SK-N-SH (cell line): ENCODE measurements at regions of chr2 and their contacts with region 1.

Region 1: DNA sequence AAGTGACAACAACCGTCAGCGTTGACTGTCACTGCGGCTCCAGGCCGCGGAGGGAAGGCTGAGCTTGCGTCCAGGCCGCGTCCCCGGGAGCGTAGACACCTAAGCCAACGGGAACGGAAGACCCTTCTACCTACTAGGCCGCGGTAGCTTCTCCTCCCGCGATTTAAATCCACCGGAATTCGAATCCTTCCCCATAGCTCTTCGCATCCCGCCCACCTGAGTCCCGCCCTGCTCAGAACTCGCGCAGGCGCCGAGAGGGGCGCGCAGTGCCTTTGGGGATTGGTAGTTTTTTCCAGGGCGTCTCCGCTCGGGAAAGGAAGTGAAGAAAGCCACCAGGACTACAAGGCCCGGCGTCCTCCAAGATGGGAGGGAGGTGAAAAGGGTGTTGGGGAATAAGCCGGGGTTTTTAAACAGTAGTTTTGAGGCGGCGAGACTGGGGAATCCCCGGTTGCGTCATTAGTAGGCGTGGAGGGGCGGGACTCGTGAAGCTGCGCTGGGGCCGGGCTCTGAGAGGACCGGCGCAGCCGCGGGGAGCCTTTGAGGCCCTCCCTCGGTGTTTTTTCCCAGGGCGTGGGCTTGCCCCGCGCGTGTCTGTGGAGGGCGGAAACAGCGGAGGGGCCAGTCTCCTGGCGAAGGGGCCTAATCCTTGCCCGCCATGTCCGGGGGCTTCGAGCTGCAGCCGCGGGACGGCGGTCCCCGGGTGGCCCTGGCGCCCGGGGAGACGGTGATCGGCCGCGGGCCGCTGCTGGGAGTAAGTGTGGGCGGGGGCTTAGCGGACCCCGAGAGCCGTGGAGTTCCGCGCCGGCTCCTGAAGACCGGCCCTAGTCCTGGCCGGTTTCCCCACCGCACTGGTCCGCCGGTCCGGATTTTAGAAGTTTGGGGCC is at the starts of genes APLF and FBXO48:
- DNase-seq: peak; percentile 95
- H3K4me3 ChIP-seq: peak within 1 kb of the TSS; percentile 88 to 98
- H3K27ac ChIP-seq: peak within 1 kb of the TSS; percentile 72 to 86
- H3K4me1 ChIP-seq: peaks cover 0 to 12% of the 10 kb centered on the region in 2 experiments; a peak in 2 of 4 replicates
- H3K27me3 ChIP-seq: no peaks in the 10 kb centered on the region
- CTCF ChIP-seq: no peak
- EP300 ChIP-seq: no peak
- RAD21 ChIP-seq: no peak
- polyA plus RNA-seq, gene APLF: 1.1 and 1.3 TPM in 2 replicates
- polyA plus RNA-seq, gene FBXO48: 0.30 and 0.45 TPM in 2 replicates

Region 2: DNA sequence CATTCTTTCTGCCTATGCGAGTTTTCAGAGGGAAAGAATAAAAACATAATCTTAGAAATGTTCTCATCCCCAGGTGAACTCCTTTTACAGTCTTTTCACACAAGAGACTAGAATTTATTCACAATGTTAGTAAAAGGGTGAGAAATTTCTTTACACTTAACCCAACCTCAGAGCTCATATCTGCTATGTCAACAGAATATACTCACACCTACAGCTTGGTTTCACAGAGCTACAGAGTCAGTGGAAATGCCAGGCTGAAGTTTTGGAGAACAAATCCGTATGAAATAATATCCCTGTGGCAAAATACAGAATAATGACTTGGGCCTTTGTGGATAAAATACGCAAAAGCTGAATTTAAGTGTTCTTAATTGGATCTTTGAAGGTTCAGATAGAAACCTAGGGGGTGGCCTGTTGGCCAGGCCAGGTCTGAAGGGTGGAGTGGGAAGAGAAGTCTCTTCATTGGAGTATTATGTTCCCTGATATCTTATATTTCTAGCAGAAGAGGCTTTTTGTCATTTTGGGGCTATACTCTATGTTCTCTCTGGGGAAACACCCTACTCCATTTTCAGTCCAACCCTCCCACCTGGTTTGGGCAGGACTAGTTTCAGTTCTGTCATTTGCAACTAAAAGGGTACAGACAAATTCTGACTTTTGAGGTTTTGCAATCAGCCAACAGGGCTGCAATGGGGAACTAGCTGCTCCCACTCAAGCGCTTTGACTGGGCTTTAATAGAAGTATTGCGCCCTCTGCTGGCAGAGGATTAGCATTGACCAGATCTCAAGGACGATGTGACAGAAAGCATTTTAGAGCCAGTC is 25.9 kb before region 1 on chr2:
- CTCF ChIA-PET with region 1: interaction called, 13 read pairs
- POLR2A ChIA-PET with region 1: no interaction called
- DNase-seq: peak; percentile 72
- H3K4me3 ChIP-seq: peak overlapping the region in 1 of 2 experiments; percentile 26; a peak in 1 of 4 replicates
- H3K27ac ChIP-seq: no peak overlapping the region
- H3K4me1 ChIP-seq: peaks cover 0 to 3% of the 10 kb centered on the region in 2 experiments; a peak in 1 of 4 replicates
- H3K27me3 ChIP-seq: no peaks in the 10 kb centered on the region
- CTCF ChIP-seq: peak; percentile 94
- EP300 ChIP-seq: no peak
- RAD21 ChIP-seq: peak; percentile 91

Region 3: DNA sequence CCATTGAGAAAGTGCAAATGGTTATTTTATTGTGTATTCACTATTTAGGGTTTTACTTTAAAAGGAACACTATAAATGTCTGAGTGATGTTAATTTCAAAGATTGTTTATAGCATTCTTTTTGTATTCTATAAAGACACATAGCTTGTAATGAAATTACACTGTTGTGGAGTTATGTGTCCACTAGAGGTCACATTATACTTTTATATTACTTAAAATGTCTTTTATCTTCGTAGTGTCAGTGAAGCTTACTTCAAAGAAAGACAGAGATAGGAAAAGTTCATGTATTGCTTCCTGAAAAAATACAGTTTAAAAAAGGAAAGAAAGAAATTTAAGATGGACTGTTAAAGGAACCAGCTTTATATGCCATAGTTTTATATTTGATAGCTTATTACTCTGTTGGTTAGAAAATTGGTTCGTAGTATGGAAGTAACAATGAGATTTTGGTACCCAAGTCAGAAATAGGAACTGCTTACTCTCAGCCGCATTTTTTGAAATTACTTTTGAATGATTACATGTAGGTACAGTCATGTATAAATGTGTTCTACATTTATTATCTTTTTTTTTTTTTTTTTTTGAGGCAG is 20.5 kb after region 1 on chr2:
- CTCF ChIA-PET with region 1: interaction called, 11 read pairs
- POLR2A ChIA-PET with region 1: no interaction called
- DNase-seq: peak; percentile 36
- H3K4me3 ChIP-seq: no peak overlapping the region; a peak in 1 of 4 replicates
- H3K27ac ChIP-seq: no peak overlapping the region
- H3K4me1 ChIP-seq: no peaks in the 10 kb centered on the region; a peak in 1 of 4 replicates
- H3K27me3 ChIP-seq: no peaks in the 10 kb centered on the region
- CTCF ChIP-seq: peak; percentile 72
- EP300 ChIP-seq: no peak
- RAD21 ChIP-seq: peak; percentile 66

Region 4: DNA sequence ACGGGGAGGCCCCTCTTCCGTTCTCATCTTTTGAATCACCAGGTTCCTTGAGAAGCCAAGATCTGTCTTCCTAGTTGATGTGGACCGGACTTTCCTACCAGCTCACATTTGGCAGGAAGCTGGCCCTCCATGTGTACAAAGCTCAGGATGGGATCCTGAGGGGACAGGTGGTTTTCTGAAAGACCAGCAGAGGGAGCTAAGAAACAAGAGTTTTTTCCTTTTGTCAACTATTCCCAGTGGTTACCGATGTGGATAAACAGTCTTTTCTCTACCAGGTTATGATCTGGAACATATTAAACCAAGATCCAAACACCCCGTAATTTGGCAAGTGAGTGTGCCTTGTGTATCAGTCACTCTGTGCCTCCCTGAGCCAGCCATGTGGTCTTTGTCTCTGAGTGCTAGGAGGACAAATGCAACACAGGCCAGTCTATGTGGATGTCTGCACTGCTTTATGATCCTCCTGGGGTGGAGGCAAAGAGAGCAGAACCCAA is 242.1 kb after region 1 on chr2:
- CTCF ChIA-PET with region 1: interaction called, 27 read pairs
- POLR2A ChIA-PET with region 1: no interaction called
- DNase-seq: peak; percentile 52
- H3K4me3 ChIP-seq: no peak overlapping the region
- H3K27ac ChIP-seq: peak overlapping the region in 1 of 2 experiments; percentile 53; a peak in 2 of 4 replicates
- H3K4me1 ChIP-seq: peaks cover 5 to 6% of the 10 kb centered on the region in 2 experiments; a peak in 3 of 4 replicates
- H3K27me3 ChIP-seq: peaks cover 9% of the 10 kb centered on the region; the same call in 1 of the 2 replicates
- CTCF ChIP-seq: peak; percentile 76
- EP300 ChIP-seq: no peak
- RAD21 ChIP-seq: peak; percentile 72

Region 5: DNA sequence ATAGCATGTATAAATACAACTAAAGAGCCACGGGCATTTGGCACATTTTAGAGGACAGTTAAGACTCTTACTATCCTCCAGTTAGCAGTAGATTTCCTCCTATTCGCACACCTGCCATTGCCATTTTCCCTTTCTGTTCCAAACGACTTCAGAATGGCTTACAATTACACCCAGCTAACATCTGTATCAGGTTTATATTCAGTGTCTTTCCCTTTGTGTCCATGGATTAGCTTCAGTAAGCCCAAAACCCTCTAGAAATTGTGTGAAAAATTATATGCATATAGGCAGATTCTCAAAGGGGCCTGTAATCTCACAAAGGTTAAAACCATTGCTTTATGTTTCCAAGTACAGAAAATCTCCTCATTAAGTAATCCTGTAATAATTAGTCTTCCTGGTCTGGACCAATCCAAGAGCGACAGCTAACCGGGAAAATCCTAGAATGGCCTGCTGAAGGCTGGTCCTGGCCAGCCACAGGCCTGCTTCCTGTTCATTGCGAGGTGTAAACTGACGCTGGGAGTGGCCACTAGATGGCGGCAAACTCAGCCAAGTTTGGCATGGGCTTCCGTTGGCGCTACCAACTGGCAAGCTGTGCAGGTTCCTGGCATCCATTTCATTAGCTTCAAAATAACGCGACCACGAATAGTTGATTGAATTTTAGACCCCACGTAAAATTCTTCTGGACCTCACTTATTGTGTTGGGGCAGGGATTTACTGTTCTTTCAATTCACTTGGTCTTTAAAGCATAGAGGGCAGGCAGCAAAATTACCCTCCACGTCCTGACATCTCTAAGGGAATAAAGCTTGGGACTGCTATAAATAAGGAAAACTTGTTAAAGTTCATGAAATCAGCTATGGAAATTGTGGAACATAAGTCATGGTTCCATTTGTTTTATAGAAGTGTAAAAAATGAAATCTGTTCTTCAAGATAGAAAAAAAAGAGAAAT is 284.3 kb after region 1 on chr2:
- CTCF ChIA-PET with region 1: interaction called, 45 read pairs
- POLR2A ChIA-PET with region 1: no interaction called
- DNase-seq: peak; percentile 83
- H3K4me3 ChIP-seq: peak overlapping the region in 1 of 2 experiments; percentile 34; a peak in 1 of 4 replicates
- H3K27ac ChIP-seq: no peak overlapping the region
- H3K4me1 ChIP-seq: no peaks in the 10 kb centered on the region
- H3K27me3 ChIP-seq: no peaks in the 10 kb centered on the region
- CTCF ChIP-seq: peak; percentile 92
- EP300 ChIP-seq: no peak
- RAD21 ChIP-seq: peak; percentile 94

Region 6: GRCh38 chr2:68936427-68936826 is 469.1 kb after region 1 on chr2:
- CTCF ChIA-PET with region 1: interaction called, 15 read pairs
- POLR2A ChIA-PET with region 1: no interaction called
- DNase-seq: no peak
- H3K4me3 ChIP-seq: no peak overlapping the region
- H3K27ac ChIP-seq: peak overlapping the region; percentile 48 to 50; a peak in 3 of 4 replicates
- H3K4me1 ChIP-seq: peaks cover 2 to 24% of the 10 kb centered on the region in 2 experiments; a peak in 3 of 4 replicates
- H3K27me3 ChIP-seq: no peaks in the 10 kb centered on the region
- CTCF ChIP-seq: no peak
- EP300 ChIP-seq: no peak
- RAD21 ChIP-seq: no peak